Activated CD8-positive, alpha-beta T cell treated with anti-CD3 and anti-CD28 coated beads for 36 hours (primary cell): ENCODE measurements at regions of chr2 and their contacts with region 1.

Region 1: DNA sequence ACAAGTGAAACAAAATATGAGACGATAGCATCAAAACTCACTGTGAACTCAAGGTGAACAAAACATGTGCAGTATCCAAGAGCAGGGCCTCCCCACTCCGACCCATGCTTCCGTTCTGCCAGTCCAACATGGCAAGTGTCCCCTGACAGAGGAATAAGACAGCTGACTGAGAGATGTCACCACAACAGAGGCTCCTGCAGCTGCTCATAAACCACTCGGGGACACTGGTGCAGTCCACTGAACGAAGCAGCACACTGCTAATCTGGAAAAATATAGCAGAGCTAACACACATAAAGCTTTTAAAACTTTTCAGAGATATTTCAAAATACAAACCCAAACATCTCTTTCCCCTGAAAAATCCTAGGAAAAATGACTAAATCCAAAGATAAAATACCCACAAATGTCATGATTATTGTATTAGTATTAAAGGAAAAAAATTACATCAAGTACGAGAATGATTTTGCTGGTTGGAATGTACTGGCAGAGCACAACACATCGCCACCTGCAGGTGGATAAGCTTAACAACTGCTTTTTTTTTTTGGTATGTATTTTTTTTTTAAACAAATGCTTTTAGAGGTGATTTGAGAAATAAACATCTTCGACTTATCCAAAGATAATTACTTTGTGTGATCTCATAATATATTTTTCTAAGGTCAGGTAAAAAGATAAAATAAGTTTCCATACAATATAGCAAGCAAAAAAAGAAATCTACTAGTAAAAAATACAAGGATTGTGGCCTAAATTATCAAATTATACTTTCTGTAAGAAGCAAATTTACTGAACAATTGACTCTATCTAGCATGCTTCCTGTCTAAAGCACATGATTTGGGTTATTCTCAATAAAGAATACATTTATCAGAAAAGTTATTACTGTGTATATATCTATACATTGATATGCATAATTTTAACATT is 18.6 kb downstream of the THADA start:
- DNase-seq: peak; percentile 40
- ATAC-seq: no peak
- H3K4me3 Mint-ChIP-seq: no peak overlapping the region
- H3K27ac Mint-ChIP-seq: no peak overlapping the region
- H3K4me1 Mint-ChIP-seq: peaks cover 7% of the 10 kb centered on the region
- H3K27me3 Mint-ChIP-seq: no peaks in the 10 kb centered on the region
- CTCF ChIP-seq: peak; percentile 86

Region 2: DNA sequence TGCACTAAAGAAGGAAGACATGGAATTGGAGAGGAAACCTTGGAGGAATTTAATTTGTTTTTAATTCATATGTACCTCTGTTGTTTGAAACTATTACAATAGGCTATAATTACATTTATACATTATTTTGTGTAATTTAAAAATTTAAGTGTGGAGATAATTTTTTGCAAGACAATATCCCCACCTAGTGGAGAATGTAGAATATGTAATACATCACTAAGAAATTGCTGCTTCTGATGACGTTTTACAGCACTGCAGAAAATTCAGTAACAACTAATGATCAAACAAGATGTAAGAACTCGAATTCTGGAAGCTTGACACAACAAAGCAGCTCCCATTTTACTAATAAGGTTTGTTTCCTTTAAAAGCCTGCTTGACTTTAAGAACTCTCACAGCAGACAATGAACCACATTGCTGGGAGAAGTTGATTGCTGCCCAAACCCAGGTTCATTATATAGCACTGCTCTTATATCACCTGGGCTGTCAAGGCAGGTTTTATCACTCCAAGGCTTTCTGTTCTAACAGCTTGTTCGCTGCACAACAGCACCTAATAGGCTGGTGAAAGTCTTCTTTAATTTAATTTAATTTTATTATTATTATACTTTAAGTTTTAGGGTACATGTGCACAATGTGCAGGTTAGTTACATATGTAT is 34.8 kb before region 1 on chr2:
- CTCF ChIA-PET with region 1: interaction called, 12 read pairs
- POLR2A ChIA-PET with region 1: no interaction called
- intact Hi-C with region 1: no loop called
- DNase-seq: no peak
- ATAC-seq: peak; percentile 45
- H3K4me3 Mint-ChIP-seq: no peak overlapping the region
- H3K27ac Mint-ChIP-seq: no peak overlapping the region
- H3K4me1 Mint-ChIP-seq: peaks cover 7% of the 10 kb centered on the region
- H3K27me3 Mint-ChIP-seq: no peaks in the 10 kb centered on the region
- CTCF ChIP-seq: peak; percentile 74

Region 3: GRCh38 chr2:43689989-43690388 is 112.8 kb after region 1 on chr2:
- CTCF ChIA-PET with region 1: no interaction called
- POLR2A ChIA-PET with region 1: no interaction called
- intact Hi-C with region 1: no loop called
- DNase-seq: no peak
- ATAC-seq: no peak
- H3K4me3 Mint-ChIP-seq: no peak overlapping the region
- H3K27ac Mint-ChIP-seq: no peak overlapping the region
- H3K4me1 Mint-ChIP-seq: no peaks in the 10 kb centered on the region
- H3K27me3 Mint-ChIP-seq: peaks cover 10% of the 10 kb centered on the region
- CTCF ChIP-seq: no peak